ENCODE measurements at regions of chr21 and their contacts with region 1.

Region 1: DNA sequence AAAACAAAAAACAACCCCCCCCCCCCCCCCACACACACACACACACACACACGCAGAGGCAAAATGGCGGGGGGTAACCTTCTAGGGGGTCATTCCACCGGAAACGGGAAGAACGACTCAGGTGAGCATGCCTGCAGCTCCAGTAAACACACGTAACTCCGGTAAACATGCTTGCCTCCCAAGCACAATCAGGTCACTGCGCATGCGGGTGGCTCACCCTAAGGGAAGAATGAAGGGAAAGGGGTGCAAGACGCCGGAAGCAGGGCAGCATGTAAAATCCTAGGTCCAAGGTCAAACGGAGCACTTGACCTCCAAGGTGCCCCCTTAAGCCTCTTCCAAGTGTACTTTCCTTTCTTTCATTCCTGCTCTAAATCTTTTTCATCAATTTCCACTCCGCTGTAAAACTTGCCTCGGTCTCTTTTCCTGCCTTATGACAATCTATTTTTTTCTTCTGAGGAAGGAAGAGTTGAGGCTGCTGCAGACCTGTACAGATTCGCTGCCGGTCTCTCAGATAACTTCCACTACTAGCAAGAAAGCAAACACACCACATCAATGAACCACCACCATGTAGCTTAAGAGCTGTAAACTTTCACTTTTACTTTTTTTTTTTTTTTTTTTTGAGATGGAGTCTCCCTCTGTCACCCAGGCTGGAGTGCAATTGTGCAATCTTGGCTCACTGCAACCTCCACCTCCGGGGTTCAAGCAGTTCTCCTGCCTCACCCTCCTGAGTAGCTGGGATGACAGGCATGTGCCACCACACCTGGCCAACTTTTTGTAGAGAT is 21.0 kb upstream of the CBR3 start:
- DNase-seq: peak in 1 of 2 experiments; percentile 61
- ATAC-seq: peak; percentile 58 to 63; a peak in 5 of 6 replicates
- H3K4me3 ChIP-seq: peak overlapping the region; percentile 51
- H3K27ac ChIP-seq: peak overlapping the region; percentile 31 to 85; a peak in 5 of 6 replicates
- H3K4me1 ChIP-seq: no peaks in the 10 kb centered on the region
- CTCF ChIP-seq: no peak
- EP300 ChIP-seq: no peak
- POLR2A ChIP-seq: no peak
- RAD21 ChIP-seq: no peak

Region 2: GRCh38 chr21:35611708-35612132 is 502.1 kb before region 1 on chr21:
- CTCF ChIA-PET with region 1: no interaction called
- POLR2A ChIA-PET with region 1: no interaction called
- DNase-seq: no peak
- ATAC-seq: no peak
- H3K4me3 ChIP-seq: no peak overlapping the region
- H3K27ac ChIP-seq: no peak overlapping the region
- H3K4me1 ChIP-seq: no peaks in the 10 kb centered on the region
- CTCF ChIP-seq: no peak
- EP300 ChIP-seq: no peak
- POLR2A ChIP-seq: no peak
- RAD21 ChIP-seq: no peak

Region 3: DNA sequence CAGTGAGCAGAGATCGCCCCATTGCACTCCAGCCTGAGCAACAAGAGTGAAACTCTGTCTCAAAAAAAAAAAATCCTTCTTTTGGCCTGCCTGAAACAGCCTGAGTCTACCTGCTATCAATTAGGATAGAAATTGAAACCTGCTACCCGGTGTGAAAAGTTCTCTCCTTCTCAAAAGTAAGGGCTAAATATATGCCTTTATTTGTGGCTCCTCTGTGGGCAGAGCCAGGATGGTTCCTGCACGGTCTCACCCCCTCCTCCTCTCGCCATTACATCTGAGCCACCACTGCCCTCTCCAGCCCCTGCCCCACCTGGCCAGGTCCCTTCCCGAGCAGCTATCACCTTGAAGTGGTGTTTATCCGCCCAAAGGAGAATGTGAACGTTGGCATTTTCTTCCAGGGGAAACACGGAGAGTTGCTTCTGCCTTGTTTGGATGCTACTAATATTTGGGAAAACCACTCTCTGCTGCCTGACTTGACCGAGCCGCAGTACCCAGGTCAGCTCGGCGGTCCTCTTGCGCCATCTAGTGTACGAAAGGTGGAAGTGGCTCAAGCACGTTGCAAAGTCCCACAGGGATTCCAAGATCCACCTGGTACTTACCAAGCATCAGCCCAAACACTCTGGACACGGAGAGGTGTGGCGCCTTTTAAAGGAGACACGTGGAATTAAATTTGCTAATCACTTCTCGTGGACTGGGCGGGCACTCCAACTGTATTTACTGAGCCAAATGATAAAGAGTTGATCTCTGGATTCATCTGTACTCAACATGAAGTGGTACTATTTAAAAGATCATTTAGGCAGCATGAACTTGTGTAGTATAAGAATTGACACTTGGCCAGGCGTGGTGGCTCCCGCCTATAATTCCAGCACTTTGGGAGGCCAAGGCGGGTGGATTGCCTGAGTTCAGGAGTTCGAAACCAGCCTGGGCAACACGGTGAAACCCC is 85.4 kb before region 1 on chr21:
- CTCF ChIA-PET with region 1: interaction called, 15 read pairs
- POLR2A ChIA-PET with region 1: no interaction called
- DNase-seq: peak; percentile 51 to 67
- ATAC-seq: peak; percentile 91 to 97
- H3K4me3 ChIP-seq: no peak overlapping the region
- H3K27ac ChIP-seq: no peak overlapping the region
- H3K4me1 ChIP-seq: no peaks in the 10 kb centered on the region
- CTCF ChIP-seq: peak; percentile 73
- EP300 ChIP-seq: no peak
- POLR2A ChIP-seq: no peak
- RAD21 ChIP-seq: peak; percentile 82 to 85

Region 4: DNA sequence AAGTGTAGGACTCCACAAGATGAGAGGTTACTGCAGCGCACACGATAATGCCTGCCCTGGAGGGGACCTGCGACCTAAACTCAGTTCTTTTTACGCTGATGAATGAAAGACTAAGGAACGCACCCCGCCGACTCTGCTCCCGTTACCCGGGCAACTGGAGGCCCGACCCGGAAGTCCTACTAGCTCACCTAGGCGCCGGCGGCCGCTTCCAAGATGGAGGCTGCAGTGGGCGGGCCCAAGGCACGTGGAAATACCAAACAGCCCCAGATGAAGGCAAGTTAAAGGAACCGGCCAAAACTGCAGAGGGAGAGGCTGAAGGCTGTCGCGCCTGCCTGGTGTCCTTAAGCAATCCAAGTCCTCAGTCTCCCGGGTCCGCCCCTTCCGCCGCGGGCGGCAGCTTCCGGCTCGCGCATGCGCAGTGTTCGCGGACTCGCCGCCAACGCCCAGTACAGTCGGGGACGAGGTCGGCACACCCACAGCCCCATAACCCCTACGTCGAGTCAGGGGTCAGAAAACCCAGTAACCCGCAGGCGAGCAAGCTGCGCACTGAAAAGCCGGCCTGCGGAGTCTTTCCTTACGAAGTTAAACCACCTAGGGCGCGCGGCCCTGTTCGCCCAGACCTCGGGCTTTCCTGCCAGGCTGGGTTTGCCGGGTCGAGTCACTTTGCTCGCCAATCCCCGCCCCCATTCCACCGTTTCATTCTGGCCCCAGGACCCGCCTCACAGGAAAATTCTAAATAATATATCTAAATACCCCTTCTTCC is 53.5 kb before region 1 on chr21 and contains the start of gene SETD4:
- CTCF ChIA-PET with region 1: interaction called, 8 read pairs
- POLR2A ChIA-PET with region 1: interaction called, 14 read pairs
- DNase-seq: peak; percentile 85 to 95
- ATAC-seq: peak; percentile 97 to 98
- H3K4me3 ChIP-seq: peak within 1 kb of the TSS; percentile 82
- H3K27ac ChIP-seq: peak within 1 kb of the TSS; percentile 95 to 96
- H3K4me1 ChIP-seq: peaks cover 15% of the 10 kb centered on the region
- CTCF ChIP-seq: no peak
- EP300 ChIP-seq: no peak
- POLR2A ChIP-seq: peak; percentile 60
- RAD21 ChIP-seq: no peak
- polyA plus RNA-seq, gene SETD4: 15.7 and 17.1 TPM in 2 replicates

Region 5: DNA sequence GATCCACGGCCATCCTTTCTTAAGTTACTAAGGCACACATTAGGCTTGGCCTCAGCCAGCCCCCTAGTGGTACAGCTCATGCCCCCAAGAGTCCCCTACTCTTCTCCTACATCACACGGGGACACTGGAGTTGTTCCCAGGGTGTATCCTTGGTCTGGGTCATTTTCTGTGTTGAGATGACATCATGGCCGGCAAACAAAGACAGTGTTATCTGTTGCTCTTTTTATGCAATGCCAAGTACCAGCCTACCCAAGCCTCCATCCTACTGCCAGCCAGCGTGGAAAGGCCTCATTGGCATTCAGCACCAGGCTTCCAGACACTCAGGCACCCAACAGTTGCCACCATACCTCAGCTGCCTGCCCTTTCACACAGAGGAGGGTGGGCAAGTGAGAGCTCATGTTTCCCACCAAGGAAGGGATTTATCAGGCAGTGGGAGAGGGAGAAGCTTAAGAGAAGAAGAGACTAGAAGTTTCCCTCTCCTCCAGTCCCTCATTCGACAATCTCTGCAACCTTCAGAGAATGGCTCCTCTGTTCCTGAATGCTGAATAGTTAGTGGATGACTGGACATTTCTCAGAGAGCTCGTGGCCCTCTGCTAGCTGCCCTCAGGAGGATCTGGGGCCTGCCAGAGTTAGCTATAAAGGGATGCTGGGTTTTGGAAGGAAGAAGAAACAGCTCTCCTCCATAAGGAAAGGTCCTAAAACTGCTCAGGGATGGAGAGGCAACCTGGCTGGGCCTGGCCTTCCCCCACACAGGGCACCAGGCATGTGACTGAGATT is 26.3 kb before region 1 on chr21:
- CTCF ChIA-PET with region 1: interaction called, 12 read pairs
- POLR2A ChIA-PET with region 1: no interaction called
- DNase-seq: no peak
- ATAC-seq: peak in 1 of 2 experiments; percentile 61; a peak in 2 of 6 replicates
- H3K4me3 ChIP-seq: no peak overlapping the region
- H3K27ac ChIP-seq: no peak overlapping the region
- H3K4me1 ChIP-seq: no peaks in the 10 kb centered on the region
- CTCF ChIP-seq: no peak
- EP300 ChIP-seq: no peak
- POLR2A ChIP-seq: no peak
- RAD21 ChIP-seq: no peak

Region 6: DNA sequence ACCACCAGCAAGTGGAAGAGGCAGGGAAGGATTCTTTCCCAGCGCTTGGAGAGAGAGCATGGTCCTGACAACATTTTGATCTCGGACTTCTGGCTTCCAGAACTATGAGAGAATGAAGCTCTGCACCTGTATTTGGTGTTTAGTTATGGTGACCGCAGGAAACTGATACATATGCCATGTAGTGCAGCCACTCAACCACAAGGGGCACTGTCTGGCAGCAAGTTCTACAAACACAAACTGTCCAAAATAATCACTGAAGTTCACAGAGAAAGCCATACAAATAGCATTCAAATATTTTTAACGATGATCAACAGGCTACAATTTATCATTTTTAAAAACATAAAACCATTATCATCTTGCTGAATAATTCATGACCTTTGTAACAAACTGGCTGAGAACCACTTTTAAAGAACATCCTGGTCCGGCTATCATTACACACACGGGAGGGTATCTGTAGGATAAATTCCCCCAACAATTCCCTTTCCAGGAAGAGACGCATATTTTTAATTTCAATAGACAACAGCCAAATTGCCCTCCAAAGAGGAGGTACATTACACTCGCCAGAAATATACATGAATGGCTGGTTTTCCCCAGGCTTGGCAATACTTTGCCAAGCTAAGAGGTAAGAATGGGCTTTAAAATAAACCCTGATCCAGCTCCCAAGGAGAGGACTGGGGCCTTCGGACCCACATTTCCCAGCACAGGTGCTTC is 11.8 kb after region 1 on chr21:
- CTCF ChIA-PET with region 1: interaction called, 49 read pairs
- POLR2A ChIA-PET with region 1: interaction called, 9 read pairs
- DNase-seq: peak in 1 of 2 experiments; percentile 51
- ATAC-seq: peak in 1 of 2 experiments; percentile 47; a peak in 2 of 6 replicates
- H3K4me3 ChIP-seq: no peak overlapping the region
- H3K27ac ChIP-seq: no peak overlapping the region
- H3K4me1 ChIP-seq: peaks cover 5% of the 10 kb centered on the region; the same call in 1 of the 3 replicates
- CTCF ChIP-seq: peak; percentile 55
- EP300 ChIP-seq: no peak
- POLR2A ChIP-seq: no peak
- RAD21 ChIP-seq: no peak; a peak in 2 of 5 replicates

Measured in A549 (cell line).